Activated naive CD8-positive, alpha-beta T cell treated with anti-CD3 and anti-CD28 coated beads, Interleukin-2, amount 10 ng/mL, durations not matched to agents 7 days and 5 days (primary cell): ENCODE measurements at regions of chr9 and their contacts with region 1.

Region 1: DNA sequence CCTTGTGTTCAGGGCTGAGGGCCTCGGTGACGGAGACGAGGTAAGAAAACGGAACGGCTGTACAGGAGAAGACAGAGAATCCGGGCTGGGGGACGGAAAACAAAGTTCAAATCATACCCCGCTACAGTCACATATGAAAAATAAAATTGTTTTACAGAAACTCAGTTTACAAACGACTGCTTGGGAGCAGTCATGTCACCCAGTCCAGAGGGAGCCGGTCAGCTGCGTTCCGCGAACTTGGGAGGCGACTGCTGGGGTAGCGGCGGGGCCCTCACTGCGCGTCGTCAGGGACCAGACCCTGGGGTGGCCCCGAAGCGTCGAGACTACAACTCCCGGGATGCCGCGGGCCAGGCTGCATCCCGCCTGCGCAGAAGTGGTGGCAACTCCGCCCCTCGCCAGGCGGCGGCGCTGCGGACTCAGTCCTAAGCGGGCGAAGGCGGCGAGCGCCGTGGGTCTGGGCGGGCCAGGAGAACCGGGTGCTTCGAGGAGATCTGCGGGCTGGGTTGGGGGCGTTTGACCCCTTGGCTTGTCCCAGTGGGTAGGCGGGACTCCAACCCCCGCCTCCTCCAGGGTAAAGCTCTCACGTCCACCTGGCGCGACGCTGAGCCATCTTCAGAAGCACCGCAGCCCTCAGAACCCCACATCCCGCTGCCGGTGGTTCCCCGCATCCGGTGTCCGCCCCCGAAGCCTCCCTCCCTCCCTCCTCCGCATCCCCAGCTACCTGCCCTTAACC is 4.0 kb downstream of the SIT1 start:
- DNase-seq: peak; percentile 98
- ATAC-seq: peak; percentile 83
- H3K4me3 Mint-ChIP-seq: peak overlapping the region; percentile 87
- H3K27ac Mint-ChIP-seq: peak overlapping the region; percentile 90
- H3K4me1 Mint-ChIP-seq: peaks cover 42% of the 10 kb centered on the region
- H3K27me3 Mint-ChIP-seq: no peaks in the 10 kb centered on the region

Region 2: DNA sequence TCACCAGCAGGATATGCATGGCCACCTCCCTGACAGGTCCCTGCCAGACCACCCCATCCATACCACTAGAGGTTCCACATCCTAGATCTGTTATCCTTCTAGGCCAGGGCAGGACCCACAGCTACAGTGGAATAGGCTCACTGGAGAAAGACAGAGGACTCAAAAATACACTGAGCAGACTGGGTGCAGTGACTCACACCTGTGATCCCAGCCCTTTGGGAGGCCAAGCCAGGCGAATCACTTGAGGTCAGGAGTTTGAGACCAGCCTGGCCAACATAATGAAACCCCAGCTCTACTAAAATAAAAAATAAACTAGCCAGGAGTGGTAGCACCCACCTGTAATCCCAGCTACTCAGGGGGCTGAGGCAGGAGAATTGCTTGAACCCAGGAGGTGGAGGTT is 98.1 kb before region 1 on chr9:
- POLR2A ChIA-PET with region 1: no interaction called
- DNase-seq: no peak
- ATAC-seq: no peak
- H3K4me3 Mint-ChIP-seq: no peak overlapping the region
- H3K27ac Mint-ChIP-seq: no peak overlapping the region
- H3K4me1 Mint-ChIP-seq: no peaks in the 10 kb centered on the region
- H3K27me3 Mint-ChIP-seq: peaks cover 13% of the 10 kb centered on the region

Region 3: DNA sequence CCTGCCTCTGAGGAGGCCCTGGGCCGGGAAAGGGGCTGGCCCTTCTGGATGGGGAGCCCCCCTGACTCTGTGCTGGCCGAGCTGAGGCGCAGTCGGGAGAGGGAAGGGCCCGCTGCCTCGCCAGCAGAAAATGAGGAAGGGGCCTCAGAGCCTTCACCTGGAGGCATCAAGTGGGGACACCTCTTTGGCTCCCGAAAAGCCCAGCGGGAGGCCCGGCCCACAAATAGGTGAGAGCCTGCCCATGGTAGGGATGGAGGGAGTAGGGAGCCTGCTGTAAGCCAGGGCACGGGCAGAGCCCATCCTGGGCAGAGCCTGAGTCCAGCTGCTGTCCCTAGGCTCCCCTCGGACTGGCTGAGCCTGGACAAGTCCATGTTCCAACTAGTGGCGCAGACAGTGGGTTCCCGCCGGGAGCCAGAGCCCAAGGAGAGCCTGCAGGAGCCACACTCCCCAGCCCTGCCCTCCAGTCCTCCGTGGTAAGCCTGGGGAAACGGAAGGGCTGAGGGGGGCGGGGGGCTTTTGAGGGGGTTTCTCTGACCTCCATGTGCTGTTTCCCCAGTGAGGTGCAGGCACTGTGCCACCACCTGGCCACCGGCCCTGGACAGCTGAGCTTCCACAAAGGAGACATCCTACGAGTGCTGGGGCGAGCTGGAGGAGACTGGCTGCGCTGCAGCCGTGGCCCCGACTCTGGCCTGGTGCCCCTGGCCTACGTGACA is 85.9 kb before region 1 on chr9:
- POLR2A ChIA-PET with region 1: no interaction called
- DNase-seq: no peak
- ATAC-seq: no peak
- H3K4me3 Mint-ChIP-seq: no peak overlapping the region
- H3K27ac Mint-ChIP-seq: no peak overlapping the region
- H3K4me1 Mint-ChIP-seq: peaks cover 4% of the 10 kb centered on the region
- H3K27me3 Mint-ChIP-seq: no peaks in the 10 kb centered on the region

Region 4: GRCh38 chr9:35603987-35604577 is 42.6 kb before region 1 on chr9:
- POLR2A ChIA-PET with region 1: interaction called, 29 read pairs
- DNase-seq: peak; percentile 96
- ATAC-seq: peak; percentile 86
- H3K4me3 Mint-ChIP-seq: peak overlapping the region; percentile 93
- H3K27ac Mint-ChIP-seq: peak overlapping the region; percentile 97
- H3K4me1 Mint-ChIP-seq: peaks cover 31% of the 10 kb centered on the region
- H3K27me3 Mint-ChIP-seq: no peaks in the 10 kb centered on the region

Region 5: DNA sequence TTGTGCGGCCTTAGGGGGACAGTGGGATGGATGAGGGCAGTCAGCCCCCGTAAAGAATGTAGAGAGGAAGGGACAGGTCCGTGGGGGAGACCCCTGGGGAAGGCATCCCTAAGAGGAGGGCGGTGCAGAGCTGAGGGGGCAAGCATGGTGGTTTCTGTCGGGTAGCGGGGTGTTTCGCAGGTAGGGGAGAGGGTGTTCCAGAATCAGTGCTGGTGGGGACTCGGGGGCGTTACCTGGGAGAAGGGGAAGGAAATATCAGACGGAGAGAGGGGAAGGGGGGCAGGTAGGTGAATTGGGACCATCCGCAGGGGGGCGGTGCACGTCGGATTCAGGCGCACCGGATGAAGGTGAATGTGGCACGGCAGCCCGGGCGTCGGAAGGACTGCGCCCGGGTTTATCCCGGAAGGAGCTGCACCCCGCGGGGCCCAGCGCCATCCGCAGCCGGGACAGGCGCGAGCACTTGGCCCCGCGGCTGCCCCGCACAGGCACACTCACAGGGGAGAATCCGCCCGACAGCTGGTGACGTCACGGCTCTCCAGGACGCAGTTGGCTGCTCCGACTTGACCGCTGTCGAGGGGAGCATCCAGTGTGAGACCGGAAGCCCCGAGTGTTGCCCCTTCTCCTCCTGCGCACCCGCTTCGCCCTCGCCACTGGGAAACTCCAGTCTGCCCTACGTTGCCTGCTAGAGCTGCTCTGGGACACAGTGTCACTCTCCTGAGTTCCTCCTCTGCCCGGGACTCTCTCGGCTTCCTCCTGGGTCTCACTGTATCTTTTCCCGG is 29.8 kb before region 1 on chr9:
- POLR2A ChIA-PET with region 1: interaction called, 166 read pairs
- DNase-seq: peak; percentile 79
- ATAC-seq: peak; percentile 62
- H3K4me3 Mint-ChIP-seq: peak overlapping the region; percentile 88
- H3K27ac Mint-ChIP-seq: peak overlapping the region; percentile 96
- H3K4me1 Mint-ChIP-seq: peaks cover 52% of the 10 kb centered on the region
- H3K27me3 Mint-ChIP-seq: no peaks in the 10 kb centered on the region

Region 6: DNA sequence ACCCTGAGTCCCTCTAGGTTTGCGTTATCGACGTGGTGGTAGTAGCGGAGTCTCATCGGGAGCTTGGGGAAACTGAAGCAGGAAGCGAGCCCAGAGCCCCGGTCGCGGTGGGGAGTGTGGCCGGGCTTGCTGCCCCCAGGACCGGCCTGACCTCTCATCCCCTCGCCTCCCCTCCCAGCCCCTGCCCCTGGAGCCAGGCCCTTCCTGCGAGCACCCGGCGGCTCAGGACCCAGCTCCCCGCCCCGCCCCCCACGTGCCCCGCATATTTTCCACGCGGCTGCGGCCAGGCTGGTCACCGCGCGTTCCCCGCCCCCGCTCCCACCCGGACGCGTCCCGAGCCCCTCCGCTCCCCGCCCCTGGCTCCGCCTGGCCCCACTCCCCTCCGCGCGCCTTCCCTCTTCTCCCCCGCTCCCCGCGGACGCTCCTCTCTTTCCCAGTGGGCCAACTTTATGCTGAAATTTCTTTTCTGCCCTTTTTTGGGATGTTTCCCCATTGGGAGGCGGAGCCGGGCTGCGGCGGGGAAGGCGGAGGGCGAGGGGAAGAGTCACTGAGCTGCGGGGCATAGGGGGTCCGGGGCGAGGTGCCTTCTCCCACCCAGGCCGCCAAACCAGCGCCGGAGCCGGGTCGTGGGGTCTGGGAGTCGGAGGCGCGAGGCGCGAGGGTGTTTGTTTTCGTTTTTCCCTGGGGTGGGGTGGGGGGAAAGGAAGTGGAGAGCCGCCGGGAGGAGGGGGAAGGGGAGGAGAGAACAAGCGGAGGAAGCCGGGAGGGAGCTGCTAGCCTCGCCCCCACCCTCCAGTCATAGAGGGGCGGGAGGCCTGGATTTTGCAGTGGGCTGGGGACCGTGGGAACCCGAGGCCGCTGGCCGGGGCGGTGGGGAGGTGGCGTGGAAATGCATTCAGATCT is 44.0 kb after region 1 on chr9:
- POLR2A ChIA-PET with region 1: interaction called, 10 read pairs
- DNase-seq: peak; percentile 49
- ATAC-seq: peak; percentile 37
- H3K4me3 Mint-ChIP-seq: peak overlapping the region; percentile 91
- H3K27ac Mint-ChIP-seq: peak overlapping the region; percentile 78
- H3K4me1 Mint-ChIP-seq: peaks cover 12% of the 10 kb centered on the region
- H3K27me3 Mint-ChIP-seq: no peaks in the 10 kb centered on the region

Region 7: DNA sequence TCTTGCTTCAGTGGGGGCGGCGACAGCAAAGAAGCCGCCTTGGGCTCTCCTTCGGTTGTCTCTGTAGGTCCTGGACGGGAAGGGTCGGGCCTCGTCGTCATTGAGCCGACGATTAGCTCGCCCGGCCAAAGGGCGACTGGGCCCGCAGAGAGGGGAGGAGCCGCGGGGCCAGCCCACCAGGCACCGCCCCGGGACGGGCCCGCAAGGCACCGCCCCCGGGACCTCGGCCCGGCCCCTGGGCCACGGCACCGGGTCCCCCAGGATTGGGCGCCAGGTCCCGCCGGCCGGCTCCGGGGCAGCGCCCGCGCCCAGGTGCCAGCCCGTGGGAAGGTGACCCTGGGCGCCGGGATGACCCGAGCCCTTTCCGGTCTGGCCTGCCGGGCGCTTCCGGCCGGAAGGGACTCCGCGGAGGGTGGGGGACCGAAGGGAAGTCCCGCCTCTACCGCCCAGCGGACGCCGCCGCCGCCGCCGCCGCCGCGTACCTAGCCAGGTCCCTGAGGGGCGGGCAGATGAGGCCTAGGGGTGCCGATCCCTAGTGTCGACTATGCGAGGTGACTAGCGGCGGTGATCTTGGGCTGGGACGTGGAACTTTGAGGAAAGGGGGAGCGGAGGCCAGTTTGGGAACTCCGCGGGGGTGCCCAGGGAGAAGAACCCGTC is 102.3 kb after region 1 on chr9 and contains the starts of genes GBA2 and RGP1:
- POLR2A ChIA-PET with region 1: interaction called, 13 read pairs
- DNase-seq: peak; percentile 86
- ATAC-seq: peak; percentile 81
- H3K4me3 Mint-ChIP-seq: peak within 1 kb of the TSS; percentile 94
- H3K27ac Mint-ChIP-seq: peak within 1 kb of the TSS; percentile 91
- H3K4me1 Mint-ChIP-seq: peaks cover 32% of the 10 kb centered on the region
- H3K27me3 Mint-ChIP-seq: no peaks in the 10 kb centered on the region
- total RNA-seq, gene GBA2: 60.1 to 62.2 TPM
- total RNA-seq, gene RGP1: 26.9 to 29.1 TPM

Region 8: GRCh38 chr9:35844716-35845270 is 198.1 kb after region 1 on chr9:
- POLR2A ChIA-PET with region 1: no interaction called
- DNase-seq: no peak
- ATAC-seq: peak; percentile 75
- H3K4me3 Mint-ChIP-seq: peak overlapping the region; percentile 19
- H3K27ac Mint-ChIP-seq: peak overlapping the region; percentile 30
- H3K4me1 Mint-ChIP-seq: peaks cover 26% of the 10 kb centered on the region
- H3K27me3 Mint-ChIP-seq: no peaks in the 10 kb centered on the region

Region 9: DNA sequence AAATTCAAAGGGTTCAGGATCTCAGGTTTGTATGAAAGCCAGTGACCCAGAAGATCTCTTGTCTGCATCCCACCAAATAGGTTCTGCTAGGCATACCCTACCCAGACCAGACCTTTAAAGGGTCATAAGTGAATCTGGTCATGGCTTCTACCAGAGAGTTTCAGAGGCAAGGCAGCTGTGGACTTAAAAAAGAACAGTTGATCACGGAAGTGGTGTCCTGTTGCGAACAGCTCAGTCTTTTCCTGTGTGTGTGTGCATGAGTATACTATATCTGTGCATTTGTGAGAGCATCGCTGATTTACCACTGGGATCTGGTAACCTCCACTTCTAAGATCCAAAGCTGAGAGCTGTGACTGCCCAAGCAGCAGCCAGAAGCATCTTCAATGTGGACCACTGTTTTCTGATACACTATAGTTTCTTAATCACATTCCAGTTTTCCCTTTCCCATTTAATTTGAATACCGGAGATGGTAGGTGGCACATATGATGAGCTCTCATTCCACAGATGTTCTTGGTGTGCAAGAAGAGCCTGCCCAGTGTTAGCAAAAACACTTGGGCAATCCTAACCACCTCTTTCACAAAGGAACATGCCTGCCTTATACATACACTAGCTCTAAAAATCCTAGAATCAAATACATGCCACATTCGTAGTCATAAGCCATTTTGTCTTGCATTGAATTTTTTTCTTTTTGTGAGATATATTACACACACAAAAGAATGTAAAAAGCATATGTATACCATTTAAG is 347.4 kb after region 1 on chr9:
- POLR2A ChIA-PET with region 1: no interaction called
- DNase-seq: no peak
- ATAC-seq: no peak
- H3K4me3 Mint-ChIP-seq: no peak overlapping the region
- H3K27ac Mint-ChIP-seq: no peak overlapping the region
- H3K4me1 Mint-ChIP-seq: no peaks in the 10 kb centered on the region
- H3K27me3 Mint-ChIP-seq: peaks cover 27% of the 10 kb centered on the region